Ascending aorta (tissue), 2 donors: ENCODE measurements at regions of chr7 and their contacts with region 1.

Region 1: DNA sequence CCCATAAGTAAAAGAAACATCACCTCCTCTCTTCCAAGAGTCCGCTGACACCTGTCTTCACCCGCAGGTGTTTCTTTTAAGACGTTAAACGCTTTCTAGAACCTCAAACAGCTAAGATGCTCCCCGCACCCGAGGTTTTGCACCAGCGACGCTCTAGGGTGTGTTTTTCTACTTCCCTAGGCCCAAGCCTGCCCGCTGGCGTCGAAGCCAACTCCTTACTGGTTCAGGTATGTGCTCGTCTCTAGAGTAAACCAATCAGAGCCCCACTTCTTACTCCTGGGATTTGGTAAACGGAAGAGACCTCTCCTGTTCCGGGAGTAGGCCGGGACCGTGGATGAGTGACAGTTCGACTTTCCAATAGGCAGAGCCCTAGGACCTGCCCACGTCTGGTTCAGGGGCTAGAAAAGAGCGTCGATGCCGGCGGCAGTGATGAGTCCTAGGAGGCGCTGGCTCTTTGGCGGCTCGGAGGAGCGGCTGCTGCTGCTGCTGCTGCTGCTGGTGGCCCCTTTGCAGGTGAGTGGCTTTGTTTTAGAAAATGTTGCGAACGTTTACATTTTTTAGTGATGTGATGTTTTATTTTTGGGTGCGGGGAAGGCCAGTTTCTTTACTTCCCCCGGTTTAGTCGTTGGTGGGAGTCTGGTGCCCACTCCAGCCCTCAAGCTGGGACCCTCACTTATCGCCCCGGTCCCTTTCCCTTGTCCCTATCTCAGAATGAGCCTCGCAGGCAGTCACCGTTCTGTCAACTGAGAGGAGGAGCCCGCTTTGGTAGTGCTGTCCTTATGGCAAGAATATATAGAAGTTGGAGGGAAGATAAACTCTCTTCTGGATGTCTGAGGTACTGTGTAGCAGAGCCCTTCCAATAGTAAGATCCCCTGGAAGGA is at the start of gene BPGM:
- DNase-seq: peak; percentile 96 to 99
- H3K4me3 ChIP-seq: peak within 1 kb of the TSS; percentile 73 to 81
- H3K27ac ChIP-seq: peak within 1 kb of the TSS; percentile 74 to 84
- H3K4me1 ChIP-seq: peaks cover 2 to 6% of the 10 kb centered on the region in 2 donors
- H3K27me3 ChIP-seq: no peaks in the 10 kb centered on the region
- CTCF ChIP-seq: no peak
- total RNA-seq, gene BPGM: 19.2 TPM

Region 2: DNA sequence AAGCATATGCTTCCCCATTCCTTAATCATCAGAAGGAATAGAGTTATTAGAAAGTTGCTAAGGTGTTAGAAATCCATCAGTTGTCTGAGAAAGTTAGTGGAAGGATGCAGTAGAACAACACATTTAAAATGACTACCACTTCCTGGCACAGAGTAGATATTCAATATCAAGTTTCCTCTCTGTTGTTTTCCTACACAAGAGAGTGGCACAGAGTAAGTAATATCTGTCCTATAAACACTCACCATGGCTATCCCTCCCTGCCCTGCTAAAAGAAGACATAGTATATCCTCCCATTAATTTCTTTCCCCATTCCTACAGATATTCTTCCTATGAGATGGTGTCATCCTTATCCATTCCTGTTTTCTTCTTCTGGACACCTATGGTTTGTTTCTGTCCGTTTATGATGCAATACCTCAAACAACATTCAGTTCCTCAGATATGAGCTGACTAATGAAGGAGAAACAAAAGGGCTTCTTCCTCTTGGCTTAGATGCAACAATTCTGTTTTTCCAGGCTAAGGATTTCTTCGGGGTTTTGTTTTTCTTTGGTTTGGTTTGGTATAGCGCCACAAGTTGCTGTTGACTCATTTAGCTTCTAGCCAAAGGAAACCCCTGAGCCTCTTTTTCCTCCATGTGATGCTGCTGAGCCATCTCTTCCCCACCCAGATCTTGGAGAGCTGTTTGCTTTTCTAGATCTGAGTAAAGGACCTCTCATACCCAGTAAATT is 32.9 kb before region 1 on chr7:
- intact Hi-C with region 1: loop called (anchors 2 kb)
- DNase-seq: peak in 1 of 2 donors; percentile 77
- H3K4me3 ChIP-seq: no peak overlapping the region
- H3K27ac ChIP-seq: peak overlapping the region; percentile 41 to 63
- H3K4me1 ChIP-seq: peaks cover 0 to 11% of the 10 kb centered on the region in 2 donors
- H3K27me3 ChIP-seq: no peaks in the 10 kb centered on the region
- CTCF ChIP-seq: no peak